B cell (primary cell): ENCODE measurements at regions of chr17 and their contacts with region 1.

Region 1: DNA sequence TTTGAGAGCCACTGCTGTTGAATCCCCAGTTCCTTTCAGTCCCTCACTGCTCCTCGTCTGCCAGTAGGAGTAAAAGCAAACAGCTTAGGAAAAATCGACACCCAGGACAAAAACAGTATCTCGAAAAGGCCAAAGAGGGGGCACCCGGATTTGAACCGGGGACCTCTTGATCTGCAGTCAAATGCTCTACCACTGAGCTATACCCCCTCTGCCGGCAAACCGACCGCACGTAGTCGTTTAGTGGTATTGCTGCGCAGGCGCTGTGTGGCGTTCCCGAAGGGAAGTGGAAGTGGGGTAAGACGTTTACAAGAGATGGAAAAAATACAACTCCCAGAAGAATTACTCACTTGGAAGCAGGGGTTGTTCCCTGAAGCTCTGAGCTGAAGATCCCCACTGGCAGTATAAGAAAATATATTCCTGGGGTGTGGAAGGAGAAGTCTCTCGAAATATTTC is 2.2 kb upstream of the PLXDC1 start:
- DNase-seq: peak; percentile 94
- ATAC-seq: peak; percentile 59
- H3K4me3 ChIP-seq: peak overlapping the region; percentile 62 to 93 (median 82)
- H3K4me3 Mint-ChIP-seq: peak overlapping the region; percentile 94
- H3K27ac ChIP-seq: peak overlapping the region; percentile 53 to 62
- H3K27ac Mint-ChIP-seq: peak overlapping the region; percentile 99
- H3K4me1 ChIP-seq: peaks cover 25 to 34% of the 10 kb centered on the region in 2 donors
- H3K4me1 Mint-ChIP-seq: peaks cover 30% of the 10 kb centered on the region
- H3K27me3 ChIP-seq: peaks cover 0 to 34% (median 17%) of the 10 kb centered on the region in 4 experiments
- H3K27me3 Mint-ChIP-seq: peaks cover 30% of the 10 kb centered on the region
- CTCF ChIP-seq: no peak

Region 2: GRCh38 chr17:38752119-38752929 is 401.3 kb before region 1 on chr17 and contains the start of gene PSMB3:
- CTCF ChIA-PET with region 1: interaction called, 6 read pairs
- POLR2A ChIA-PET with region 1: interaction called, 5 read pairs
- intact Hi-C with region 1: loop called (anchors 1 kb)
- DNase-seq: peak; percentile 100
- ATAC-seq: peak; percentile 85
- H3K4me3 ChIP-seq: peak within 1 kb of the TSS; percentile 61 to 100 (median 97)
- H3K4me3 Mint-ChIP-seq: peak within 1 kb of the TSS; percentile 94
- H3K27ac ChIP-seq: peak within 1 kb of the TSS; percentile 88 to 95
- H3K27ac Mint-ChIP-seq: peak within 1 kb of the TSS; percentile 93
- H3K4me1 ChIP-seq: peaks cover 49 to 59% of the 10 kb centered on the region in 2 donors
- H3K4me1 Mint-ChIP-seq: peaks cover 45% of the 10 kb centered on the region
- H3K27me3 ChIP-seq: peaks cover 0 to 37% (median 25%) of the 10 kb centered on the region in 4 experiments
- H3K27me3 Mint-ChIP-seq: peaks cover 21% of the 10 kb centered on the region
- CTCF ChIP-seq: no peak
- total RNA-seq, gene PSMB3: 106 and 109 TPM in 2 replicates

Region 3: GRCh38 chr17:38922538-38923297 is 230.9 kb before region 1 on chr17:
- CTCF ChIA-PET with region 1: interaction called, 7 read pairs
- POLR2A ChIA-PET with region 1: no interaction called
- intact Hi-C with region 1: loop called (anchors 1 kb)
- DNase-seq: no peak
- ATAC-seq: no peak
- H3K4me3 ChIP-seq: no peak overlapping the region
- H3K4me3 Mint-ChIP-seq: no peak overlapping the region
- H3K27ac ChIP-seq: no peak overlapping the region
- H3K27ac Mint-ChIP-seq: no peak overlapping the region
- H3K4me1 ChIP-seq: peaks cover 0 to 3% of the 10 kb centered on the region in 2 donors
- H3K4me1 Mint-ChIP-seq: peaks cover 22% of the 10 kb centered on the region
- H3K27me3 ChIP-seq: no peaks in the 10 kb centered on the region
- H3K27me3 Mint-ChIP-seq: no peaks in the 10 kb centered on the region
- CTCF ChIP-seq: no peak

Region 4: DNA sequence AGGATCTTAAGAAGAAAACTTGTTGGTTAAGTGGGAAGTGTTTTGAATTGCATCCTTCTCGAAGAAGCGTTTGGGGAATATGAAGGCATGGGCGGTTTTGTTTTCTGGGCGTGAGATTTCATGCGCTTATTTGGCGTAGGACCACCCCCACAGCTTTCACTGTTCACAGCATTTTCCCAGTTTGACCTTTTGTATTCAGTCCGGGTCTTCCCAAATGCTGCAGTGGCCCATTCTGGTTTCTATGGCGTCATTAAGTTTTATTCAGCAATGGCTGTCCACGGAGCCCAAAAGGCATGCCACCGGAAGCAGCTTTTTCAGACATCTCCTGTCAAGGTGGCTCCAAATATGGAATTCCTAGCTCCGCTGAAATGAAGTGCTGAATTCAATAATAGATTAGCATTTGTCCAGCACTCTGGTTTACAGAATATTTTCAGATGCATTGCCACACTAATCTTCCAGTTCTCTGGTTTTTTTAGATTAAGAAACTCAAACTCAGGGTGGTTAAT is 95.9 kb before region 1 on chr17:
- CTCF ChIA-PET with region 1: interaction called, 16 read pairs
- POLR2A ChIA-PET with region 1: no interaction called
- intact Hi-C with region 1: loop called (anchors 1 kb)
- DNase-seq: peak; percentile 15
- ATAC-seq: no peak
- H3K4me3 ChIP-seq: no peak overlapping the region
- H3K4me3 Mint-ChIP-seq: peak overlapping the region; percentile 89
- H3K27ac ChIP-seq: no peak overlapping the region
- H3K27ac Mint-ChIP-seq: no peak overlapping the region
- H3K4me1 ChIP-seq: peaks cover 7 to 13% of the 10 kb centered on the region in 2 donors
- H3K4me1 Mint-ChIP-seq: peaks cover 8% of the 10 kb centered on the region
- H3K27me3 ChIP-seq: peaks cover 0 to under 1% (median 0%) of the 10 kb centered on the region in 4 experiments
- H3K27me3 Mint-ChIP-seq: peaks cover 6% of the 10 kb centered on the region
- CTCF ChIP-seq: no peak

Region 5: DNA sequence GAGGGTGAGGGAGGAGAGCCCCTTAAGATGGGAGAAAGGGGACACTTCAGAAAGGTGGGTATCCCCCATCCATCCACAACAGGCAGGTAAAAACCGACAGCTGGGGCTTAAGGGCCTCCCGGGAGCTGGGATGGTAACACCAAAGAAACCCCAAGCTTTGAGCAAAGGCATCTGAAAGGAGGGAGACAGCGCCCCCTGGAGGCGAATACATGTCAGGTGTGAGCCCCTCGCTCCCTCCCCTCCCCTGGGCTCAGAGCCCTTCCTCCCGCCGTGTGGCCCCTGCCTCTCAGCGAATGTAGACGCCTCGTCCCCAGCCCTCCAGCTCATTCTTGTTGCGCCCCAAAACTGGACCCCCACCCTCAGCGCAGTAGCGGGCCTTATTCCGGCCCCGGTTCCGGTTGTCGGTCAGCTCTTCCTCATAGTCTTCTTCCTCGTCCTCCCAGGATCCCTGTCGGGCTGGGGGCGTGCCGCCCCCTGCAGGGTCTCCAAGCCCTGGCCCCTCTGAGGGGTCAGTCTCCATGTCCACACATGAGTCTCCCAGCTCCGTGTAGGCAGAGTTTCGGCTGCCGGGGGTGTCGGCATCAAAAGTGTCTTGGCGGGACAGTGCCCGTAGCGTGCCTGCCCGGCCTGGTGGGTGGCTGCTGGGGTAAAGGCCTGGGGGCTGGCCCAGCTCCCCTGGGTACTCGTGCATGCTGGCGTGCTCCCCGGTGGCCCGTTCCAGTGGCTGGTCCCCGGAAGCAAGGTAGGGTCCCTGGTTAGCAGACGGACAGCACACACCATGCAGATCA is 21.5 kb after region 1 on chr17:
- CTCF ChIA-PET with region 1: interaction called, 33 read pairs
- POLR2A ChIA-PET with region 1: interaction called, 3 read pairs
- intact Hi-C with region 1: no loop called
- DNase-seq: peak; percentile 83
- ATAC-seq: peak; percentile 76
- H3K4me3 ChIP-seq: peak overlapping the region in 2 of 5 experiments; percentile 9 to 35
- H3K4me3 Mint-ChIP-seq: peak overlapping the region; percentile 53
- H3K27ac ChIP-seq: no peak overlapping the region
- H3K27ac Mint-ChIP-seq: no peak overlapping the region
- H3K4me1 ChIP-seq: peaks cover 0 to 7% of the 10 kb centered on the region in 2 donors
- H3K4me1 Mint-ChIP-seq: peaks cover 5% of the 10 kb centered on the region
- H3K27me3 ChIP-seq: peaks cover 0 to 30% (median 10%) of the 10 kb centered on the region in 4 experiments
- H3K27me3 Mint-ChIP-seq: peaks cover 23% of the 10 kb centered on the region
- CTCF ChIP-seq: peak; percentile 82

Region 6: DNA sequence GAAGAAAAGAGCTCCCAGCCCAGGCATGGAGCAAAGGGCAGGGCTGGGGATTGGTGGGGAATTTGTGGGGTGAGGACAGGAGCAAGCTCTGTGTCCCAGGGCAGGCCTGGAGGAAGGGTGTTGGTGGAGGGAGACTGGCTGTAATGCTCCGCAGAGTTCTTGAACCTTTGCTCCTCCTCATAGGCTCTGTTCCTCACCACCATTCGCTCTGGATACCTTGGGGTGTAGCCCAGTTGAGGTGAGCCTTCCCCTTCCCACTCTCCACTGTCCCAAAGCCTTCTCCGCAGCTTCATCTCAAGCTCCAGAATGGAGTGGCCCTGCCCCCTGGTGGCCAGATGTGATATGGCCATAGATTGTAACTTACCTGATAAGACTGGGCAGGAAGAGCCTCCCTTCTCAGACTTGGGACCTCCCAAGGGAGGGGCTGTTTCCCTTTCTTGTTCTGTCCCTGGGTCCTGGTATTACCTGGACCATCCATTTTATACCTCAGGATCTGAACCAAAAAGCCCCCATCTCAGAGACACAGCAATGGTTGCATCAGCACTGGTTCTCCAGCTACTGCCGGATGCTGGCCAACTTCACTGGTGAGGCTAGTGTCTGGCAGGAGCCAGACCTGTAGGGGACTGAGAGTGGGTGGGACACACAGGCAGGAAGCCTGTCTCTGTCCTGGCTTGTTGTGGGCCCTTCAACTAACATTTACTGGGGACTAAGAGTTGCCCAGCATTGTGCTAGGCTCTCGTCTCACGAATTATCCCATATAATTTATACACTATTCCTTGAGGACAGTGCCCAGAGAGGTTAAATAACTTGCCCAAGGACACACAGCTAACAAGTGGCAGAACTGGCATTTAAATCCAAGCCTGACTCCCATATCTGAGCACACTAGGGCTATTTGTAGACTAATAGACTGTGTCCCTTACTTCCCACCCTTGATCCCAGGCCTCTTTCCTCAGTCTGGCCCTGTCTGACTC is 91.3 kb after region 1 on chr17:
- CTCF ChIA-PET with region 1: interaction called, 30 read pairs
- POLR2A ChIA-PET with region 1: no interaction called
- intact Hi-C with region 1: no loop called
- DNase-seq: peak; percentile 87
- ATAC-seq: peak; percentile 80
- H3K4me3 ChIP-seq: no peak overlapping the region
- H3K4me3 Mint-ChIP-seq: peak overlapping the region; percentile 73
- H3K27ac ChIP-seq: no peak overlapping the region
- H3K27ac Mint-ChIP-seq: no peak overlapping the region
- H3K4me1 ChIP-seq: peaks cover 12 to 17% of the 10 kb centered on the region in 2 donors
- H3K4me1 Mint-ChIP-seq: peaks cover 17% of the 10 kb centered on the region
- H3K27me3 ChIP-seq: peaks cover 0 to 4% (median 0%) of the 10 kb centered on the region in 4 experiments
- H3K27me3 Mint-ChIP-seq: peaks cover 2% of the 10 kb centered on the region
- CTCF ChIP-seq: peak; percentile 97